GM12878 (cell line): ENCODE measurements at regions of chr4 and their contacts with region 1.

Region 1: GRCh38 chr4:74874753-74875367 is 58.1 kb upstream of the PARM1 start:
- DNase-seq: peak; percentile 20
- ATAC-seq: peak; percentile 89
- H3K4me3 ChIP-seq: no peak overlapping the region
- H3K27ac ChIP-seq: no peak overlapping the region
- H3K4me1 ChIP-seq: peaks cover 22% of the 10 kb centered on the region
- H3K27me3 ChIP-seq: no peaks in the 10 kb centered on the region
- CTCF ChIP-seq: peak; percentile 78 to 87 (median 84)
- EP300 ChIP-seq: no peak
- POLR2A ChIP-seq: no peak
- RAD21 ChIP-seq: peak; percentile 88

Region 2: GRCh38 chr4:74823194-74823593 is 51.7 kb before region 1 on chr4:
- CTCF ChIA-PET with region 1: no interaction called
- POLR2A ChIA-PET with region 1: no interaction called
- RAD21 ChIA-PET with region 1: no interaction called
- SMC1A ChIA-PET with region 1: no interaction called
- in situ Hi-C with region 1: no loop called
- intact Hi-C with region 1: no loop called
- DNase-seq: no peak
- ATAC-seq: peak; percentile 69
- H3K4me3 ChIP-seq: no peak overlapping the region
- H3K27ac ChIP-seq: no peak overlapping the region
- H3K4me1 ChIP-seq: no peaks in the 10 kb centered on the region
- H3K27me3 ChIP-seq: no peaks in the 10 kb centered on the region
- CTCF ChIP-seq: no peak
- EP300 ChIP-seq: no peak
- POLR2A ChIP-seq: no peak
- RAD21 ChIP-seq: no peak

Region 3: DNA sequence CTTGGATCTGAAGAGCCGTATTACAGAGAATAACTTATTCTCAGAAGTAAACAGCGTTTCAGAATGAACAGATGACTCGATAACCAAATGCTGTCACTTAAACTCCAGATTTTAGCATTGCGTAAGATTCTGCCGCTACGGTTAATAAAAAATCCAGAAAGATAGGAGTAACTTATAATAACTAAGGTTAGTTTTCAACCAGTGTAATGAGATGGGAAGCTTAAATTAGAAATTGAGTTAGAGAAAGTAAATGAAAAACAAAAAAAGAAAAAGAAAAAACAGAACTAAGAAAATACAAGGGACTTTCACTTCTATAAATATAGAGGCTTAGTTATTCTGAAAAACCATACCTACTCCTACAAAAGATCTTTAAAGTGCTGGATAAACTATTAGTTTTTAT is 44.9 kb after region 1 on chr4:
- CTCF ChIA-PET with region 1: interaction called, 31 read pairs
- POLR2A ChIA-PET with region 1: no interaction called
- RAD21 ChIA-PET with region 1: interaction called, 5 read pairs
- SMC1A ChIA-PET with region 1: interaction called, 18 read pairs
- in situ Hi-C with region 1: no loop called
- intact Hi-C with region 1: loop called (anchors 5 kb)
- DNase-seq: no peak
- ATAC-seq: peak; percentile 73
- H3K4me3 ChIP-seq: peak overlapping the region; percentile 44
- H3K27ac ChIP-seq: peak overlapping the region; percentile 59
- H3K4me1 ChIP-seq: peaks cover 28% of the 10 kb centered on the region
- H3K27me3 ChIP-seq: no peaks in the 10 kb centered on the region
- CTCF ChIP-seq: no peak
- EP300 ChIP-seq: peak in 1 of 2 experiments; percentile 23; a peak in 1 of 4 replicates
- POLR2A ChIP-seq: no peak
- RAD21 ChIP-seq: no peak

Region 4: GRCh38 chr4:75118739-75119138 is 243.9 kb after region 1 on chr4:
- CTCF ChIA-PET with region 1: interaction called, 30 read pairs
- POLR2A ChIA-PET with region 1: no interaction called
- RAD21 ChIA-PET with region 1: interaction called, 26 read pairs
- SMC1A ChIA-PET with region 1: interaction called, 16 read pairs
- in situ Hi-C with region 1: no loop called
- intact Hi-C with region 1: loop called (anchors 1 kb)
- DNase-seq: no peak
- ATAC-seq: no peak
- H3K4me3 ChIP-seq: no peak overlapping the region
- H3K27ac ChIP-seq: no peak overlapping the region
- H3K4me1 ChIP-seq: no peaks in the 10 kb centered on the region
- H3K27me3 ChIP-seq: no peaks in the 10 kb centered on the region
- CTCF ChIP-seq: no peak
- EP300 ChIP-seq: no peak
- POLR2A ChIP-seq: no peak
- RAD21 ChIP-seq: no peak

Region 5: GRCh38 chr4:75469896-75470295 is 595.0 kb after region 1 on chr4:
- CTCF ChIA-PET with region 1: interaction called, 11 read pairs
- POLR2A ChIA-PET with region 1: no interaction called
- RAD21 ChIA-PET with region 1: interaction called, 9 read pairs
- SMC1A ChIA-PET with region 1: interaction called, 4 read pairs
- in situ Hi-C with region 1: no loop called
- intact Hi-C with region 1: no loop called
- DNase-seq: no peak
- ATAC-seq: no peak
- H3K4me3 ChIP-seq: no peak overlapping the region
- H3K27ac ChIP-seq: no peak overlapping the region
- H3K4me1 ChIP-seq: no peaks in the 10 kb centered on the region
- H3K27me3 ChIP-seq: no peaks in the 10 kb centered on the region
- CTCF ChIP-seq: no peak
- EP300 ChIP-seq: no peak
- POLR2A ChIP-seq: no peak
- RAD21 ChIP-seq: no peak

Region 6: DNA sequence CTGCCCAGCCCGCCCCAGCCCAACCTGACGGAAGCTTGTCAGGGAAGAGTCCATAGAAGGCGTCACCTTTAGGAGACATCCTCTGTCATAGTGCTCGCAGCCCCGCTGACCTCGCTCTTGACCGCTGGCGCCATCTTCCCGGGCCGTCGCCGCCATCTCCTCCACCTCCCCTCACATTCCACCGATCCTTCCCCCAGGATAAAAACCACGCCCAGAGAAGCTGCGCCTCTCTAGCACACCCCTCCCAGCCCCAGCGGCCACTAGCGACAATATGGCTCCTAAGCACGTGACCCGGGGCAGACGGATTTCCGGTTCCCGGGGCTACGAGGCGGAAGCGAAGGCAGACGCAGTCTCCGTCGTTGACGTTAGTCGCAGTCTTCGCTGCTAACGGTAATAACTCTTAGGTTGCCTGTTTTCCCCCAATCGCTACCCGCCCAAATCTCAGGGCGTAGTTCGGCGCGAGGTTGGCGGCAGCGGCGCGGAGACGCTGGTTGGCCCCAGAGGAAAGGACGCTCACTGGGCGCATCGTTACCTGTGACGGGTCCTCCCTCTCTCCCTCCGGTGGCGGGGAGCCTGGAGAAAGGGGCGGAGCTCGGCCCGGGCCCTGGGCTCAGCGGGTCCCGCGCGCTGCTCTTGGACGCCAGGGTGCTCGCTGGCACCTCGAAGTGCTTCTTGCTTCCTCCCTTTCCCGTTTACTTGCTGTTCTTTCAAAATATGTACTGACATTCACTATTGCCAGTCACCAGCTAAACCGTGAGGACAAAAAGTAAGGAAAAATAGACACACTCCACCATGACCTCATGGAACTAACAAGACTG is 639.5 kb after region 1 on chr4 and contains the starts of genes RCHY1 and THAP6:
- CTCF ChIA-PET with region 1: interaction called, 3 read pairs
- POLR2A ChIA-PET with region 1: no interaction called
- RAD21 ChIA-PET with region 1: no interaction called
- SMC1A ChIA-PET with region 1: no interaction called
- in situ Hi-C with region 1: no loop called
- intact Hi-C with region 1: loop called (anchors 5 kb)
- DNase-seq: peak; percentile 78
- ATAC-seq: peak; percentile 91
- H3K4me3 ChIP-seq: peak within 1 kb of the TSS; percentile 98
- H3K27ac ChIP-seq: peak within 1 kb of the TSS; percentile 84
- H3K4me1 ChIP-seq: no peaks in the 10 kb centered on the region
- H3K27me3 ChIP-seq: no peaks in the 10 kb centered on the region
- CTCF ChIP-seq: no peak
- EP300 ChIP-seq: no peak; a peak in 1 of 4 replicates
- POLR2A ChIP-seq: peak; percentile 98
- RAD21 ChIP-seq: no peak
- polyA plus RNA-seq, gene RCHY1: 19.9 to 25.0 TPM
- polyA plus RNA-seq, gene THAP6: 8.9 to 9.4 TPM